HepG2 (cell line): ENCODE measurements at regions of chr5 and their contacts with region 1.

Region 1: DNA sequence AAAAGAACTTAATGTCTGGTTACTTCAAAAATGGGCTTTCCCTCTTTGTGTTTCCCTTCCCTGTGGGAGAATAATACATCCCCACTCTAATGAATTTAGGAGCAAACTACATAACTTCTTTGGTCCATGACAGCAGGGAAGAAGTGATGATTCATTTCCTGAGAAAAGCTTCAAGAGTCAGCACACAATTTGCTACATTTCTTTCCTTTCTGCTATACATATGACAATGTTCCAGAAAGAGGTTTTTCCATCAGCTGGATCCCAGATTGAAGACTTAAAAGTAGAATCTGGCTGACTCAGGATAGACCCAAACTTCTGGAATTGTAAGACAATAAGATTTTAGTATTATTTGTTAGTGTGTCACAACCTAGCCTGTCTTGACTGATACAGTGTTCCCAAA is 126.1 kb downstream of the DRD1 start:
- DNase-seq: no peak
- ATAC-seq: no peak
- H3K4me3 ChIP-seq: no peak overlapping the region
- H3K27ac ChIP-seq: no peak overlapping the region
- H3K4me1 ChIP-seq: no peaks in the 10 kb centered on the region
- H3K27me3 ChIP-seq: no peaks in the 10 kb centered on the region
- CTCF ChIP-seq: no peak
- EP300 ChIP-seq: no peak
- POLR2A ChIP-seq: no peak
- RAD21 ChIP-seq: no peak

Region 2: GRCh38 chr5:175261090-175261489 is 56.8 kb before region 1 on chr5:
- CTCF ChIA-PET with region 1: no interaction called
- POLR2A ChIA-PET with region 1: no interaction called
- in situ Hi-C with region 1: no loop called
- intact Hi-C with region 1: loop called (anchors 2 kb)
- DNase-seq: no peak
- ATAC-seq: no peak
- H3K4me3 ChIP-seq: no peak overlapping the region
- H3K27ac ChIP-seq: no peak overlapping the region
- H3K4me1 ChIP-seq: no peaks in the 10 kb centered on the region
- H3K27me3 ChIP-seq: no peaks in the 10 kb centered on the region
- CTCF ChIP-seq: no peak
- EP300 ChIP-seq: no peak
- POLR2A ChIP-seq: no peak
- RAD21 ChIP-seq: no peak

Region 3: DNA sequence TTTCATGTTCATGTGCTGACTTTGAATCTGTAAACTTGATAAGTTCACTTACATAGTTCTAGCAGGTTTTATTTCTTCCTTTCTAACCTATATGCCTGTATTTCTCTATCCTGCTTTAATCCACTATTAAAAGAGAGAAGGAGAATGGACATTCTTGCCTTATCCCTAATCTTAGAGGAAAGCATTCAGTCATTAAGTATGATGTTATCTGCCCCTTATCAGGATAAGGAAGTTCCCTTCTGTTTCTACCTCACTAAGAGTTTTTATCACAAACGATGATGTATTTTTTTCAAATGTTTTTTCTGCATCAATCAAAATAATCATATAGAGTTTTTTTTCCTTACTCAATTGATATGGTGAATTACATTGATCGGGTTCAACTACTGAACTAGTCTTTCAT is 93.1 kb after region 1 on chr5:
- CTCF ChIA-PET with region 1: no interaction called
- POLR2A ChIA-PET with region 1: no interaction called
- in situ Hi-C with region 1: no loop called
- intact Hi-C with region 1: no loop called
- DNase-seq: no peak
- ATAC-seq: no peak
- H3K4me3 ChIP-seq: no peak overlapping the region
- H3K27ac ChIP-seq: no peak overlapping the region
- H3K4me1 ChIP-seq: no peaks in the 10 kb centered on the region
- H3K27me3 ChIP-seq: no peaks in the 10 kb centered on the region
- CTCF ChIP-seq: no peak
- EP300 ChIP-seq: no peak
- POLR2A ChIP-seq: no peak
- RAD21 ChIP-seq: no peak